ENCODE measurements at regions of chrX and their contacts with region 1.

Region 1: DNA sequence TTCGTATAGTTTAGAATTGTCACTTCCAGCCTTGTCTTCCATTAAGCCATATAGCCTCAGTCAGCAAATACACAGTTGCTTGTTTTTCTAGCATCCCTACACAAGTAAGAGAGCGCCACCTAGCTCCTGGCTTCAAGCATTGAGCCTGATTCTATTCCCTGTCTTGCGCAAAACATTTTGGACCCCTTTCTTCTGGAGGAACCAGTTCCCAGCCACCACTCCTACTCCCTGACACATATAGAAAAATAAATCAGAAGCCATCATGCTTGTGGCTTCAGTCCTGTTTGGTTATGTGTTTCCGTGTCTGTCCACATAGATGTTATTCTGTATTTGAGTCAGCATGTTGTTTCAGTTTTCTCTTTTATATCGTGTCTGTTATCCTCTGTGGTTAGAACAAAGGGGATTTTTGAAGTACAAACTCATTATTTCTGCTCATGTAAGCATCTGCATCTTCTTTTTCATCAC is 59.9 kb downstream of the GK start:
- DNase-seq: peak; percentile 31
- H3K4me3 Mint-ChIP-seq: peak overlapping the region; percentile 20
- H3K27ac Mint-ChIP-seq: peak overlapping the region; percentile 86
- H3K4me1 Mint-ChIP-seq: peaks cover 47% of the 10 kb centered on the region
- H3K27me3 Mint-ChIP-seq: no peaks in the 10 kb centered on the region

Region 2: DNA sequence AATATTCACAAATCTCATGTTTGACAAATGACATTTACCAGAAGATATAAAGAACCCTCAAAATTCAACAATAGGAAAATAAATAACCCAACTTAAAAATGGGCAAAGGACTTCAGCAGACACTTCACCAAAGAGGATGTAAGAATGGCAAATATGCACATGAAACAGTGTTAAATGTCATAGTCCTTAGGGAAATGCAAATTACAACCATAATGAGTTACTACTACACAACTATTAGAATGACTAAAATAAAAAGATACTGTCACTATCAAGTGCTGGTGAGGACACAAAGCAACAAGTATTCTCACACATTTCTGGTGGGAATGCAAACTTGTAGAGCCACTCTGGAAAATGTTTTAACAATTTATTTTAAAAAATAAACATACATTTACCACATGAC is 363.1 kb before region 1 on chrX:
- intact Hi-C with region 1: no loop called
- DNase-seq: no peak
- H3K4me3 Mint-ChIP-seq: no peak overlapping the region
- H3K27ac Mint-ChIP-seq: no peak overlapping the region
- H3K4me1 Mint-ChIP-seq: no peaks in the 10 kb centered on the region
- H3K27me3 Mint-ChIP-seq: no peaks in the 10 kb centered on the region

Region 3: GRCh38 chrX:30577362-30577991 is 135.6 kb before region 1 on chrX and contains the start of gene TASL:
- intact Hi-C with region 1: loop called (anchors 2 kb)
- DNase-seq: peak; percentile 27
- H3K4me3 Mint-ChIP-seq: peak within 1 kb of the TSS; percentile 92
- H3K27ac Mint-ChIP-seq: peak within 1 kb of the TSS; percentile 96
- H3K4me1 Mint-ChIP-seq: peaks cover 18% of the 10 kb centered on the region
- H3K27me3 Mint-ChIP-seq: no peaks in the 10 kb centered on the region
- total RNA-seq, gene TASL: 5.2 and 5.4 TPM in 2 replicates

Region 4: GRCh38 chrX:30635630-30636029 is 77.5 kb before region 1 on chrX:
- intact Hi-C with region 1: loop called (anchors 1 kb)
- DNase-seq: no peak
- H3K4me3 Mint-ChIP-seq: no peak overlapping the region
- H3K27ac Mint-ChIP-seq: no peak overlapping the region
- H3K4me1 Mint-ChIP-seq: peaks cover 3% of the 10 kb centered on the region
- H3K27me3 Mint-ChIP-seq: no peaks in the 10 kb centered on the region

Region 5: GRCh38 chrX:30643313-30643821 is 69.7 kb before region 1 on chrX:
- intact Hi-C with region 1: loop called (anchors 2 kb)
- DNase-seq: no peak
- H3K4me3 Mint-ChIP-seq: no peak overlapping the region
- H3K27ac Mint-ChIP-seq: peak overlapping the region; percentile 79
- H3K4me1 Mint-ChIP-seq: peaks cover 22% of the 10 kb centered on the region
- H3K27me3 Mint-ChIP-seq: no peaks in the 10 kb centered on the region

Region 6: DNA sequence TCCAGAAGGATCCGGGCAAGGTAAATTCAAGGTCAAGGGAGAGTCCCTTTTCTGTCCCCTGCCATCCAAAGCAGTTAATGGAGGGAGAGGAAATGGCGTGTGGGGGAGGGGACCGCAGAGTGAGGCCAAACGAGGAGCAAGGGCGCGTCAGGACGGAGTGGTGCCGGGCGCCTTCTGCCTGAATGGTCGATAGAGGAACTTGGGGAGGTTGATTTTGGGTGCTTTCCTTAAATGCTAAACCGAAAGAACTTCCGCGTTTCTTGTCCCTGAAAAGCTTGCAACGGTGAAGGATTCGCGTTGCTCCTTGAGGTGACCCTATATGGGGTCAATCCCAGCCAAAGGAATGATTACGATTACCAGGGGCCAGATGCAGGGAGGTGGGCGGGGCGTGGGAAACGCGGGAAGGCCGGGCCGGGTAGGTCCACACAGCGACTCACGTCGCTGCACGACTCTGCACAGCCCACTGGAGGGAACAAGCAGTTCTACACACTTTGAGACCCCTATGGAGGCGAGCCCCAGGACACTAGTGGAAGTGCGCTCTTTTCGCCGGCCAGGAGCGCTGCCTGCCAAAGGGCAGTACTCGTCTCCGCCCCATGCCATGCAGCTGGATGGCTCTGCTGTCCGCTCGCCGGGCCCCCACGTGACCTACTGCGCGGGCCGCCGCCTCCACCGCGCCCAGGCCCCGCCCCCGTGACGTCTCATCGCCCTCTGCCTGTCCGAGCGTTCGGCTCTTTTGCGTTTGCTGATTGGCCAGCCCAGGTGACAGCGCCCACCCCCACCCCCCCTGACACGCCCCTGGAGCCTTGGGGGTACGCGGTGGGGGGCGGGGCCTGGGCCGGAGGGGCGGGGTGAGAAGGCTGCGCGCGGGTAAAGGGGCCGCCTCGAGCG is 60.3 kb before region 1 on chrX:
- intact Hi-C with region 1: loop called (anchors 1 kb)
- DNase-seq: peak; percentile 89
- H3K4me3 Mint-ChIP-seq: peak overlapping the region; percentile 94
- H3K27ac Mint-ChIP-seq: peak overlapping the region; percentile 98
- H3K4me1 Mint-ChIP-seq: peaks cover 42% of the 10 kb centered on the region
- H3K27me3 Mint-ChIP-seq: no peaks in the 10 kb centered on the region

Region 7: DNA sequence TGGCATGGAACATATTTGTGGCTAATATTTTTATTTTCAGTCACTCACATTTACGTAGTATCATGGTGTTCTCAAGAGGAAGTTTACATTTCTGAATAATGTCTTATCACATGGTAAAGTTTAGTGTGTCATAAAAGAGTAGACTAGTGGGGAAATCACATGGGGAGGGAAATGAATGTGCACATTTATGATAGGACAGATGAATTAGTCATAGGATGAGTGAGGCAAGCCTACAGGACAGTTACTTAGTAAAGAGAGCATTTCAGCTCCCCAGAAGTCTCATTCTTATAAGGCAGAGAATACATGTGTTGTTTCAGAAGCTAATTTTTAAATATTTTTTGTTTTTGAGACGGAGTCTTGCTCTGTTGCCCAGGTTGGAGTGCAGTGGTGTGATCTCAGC is 53.7 kb before region 1 on chrX:
- intact Hi-C with region 1: loop called (anchors 1 kb)
- DNase-seq: no peak
- H3K4me3 Mint-ChIP-seq: peak overlapping the region; percentile 5
- H3K27ac Mint-ChIP-seq: peak overlapping the region; percentile 88
- H3K4me1 Mint-ChIP-seq: peaks cover 41% of the 10 kb centered on the region
- H3K27me3 Mint-ChIP-seq: no peaks in the 10 kb centered on the region

Region 8: DNA sequence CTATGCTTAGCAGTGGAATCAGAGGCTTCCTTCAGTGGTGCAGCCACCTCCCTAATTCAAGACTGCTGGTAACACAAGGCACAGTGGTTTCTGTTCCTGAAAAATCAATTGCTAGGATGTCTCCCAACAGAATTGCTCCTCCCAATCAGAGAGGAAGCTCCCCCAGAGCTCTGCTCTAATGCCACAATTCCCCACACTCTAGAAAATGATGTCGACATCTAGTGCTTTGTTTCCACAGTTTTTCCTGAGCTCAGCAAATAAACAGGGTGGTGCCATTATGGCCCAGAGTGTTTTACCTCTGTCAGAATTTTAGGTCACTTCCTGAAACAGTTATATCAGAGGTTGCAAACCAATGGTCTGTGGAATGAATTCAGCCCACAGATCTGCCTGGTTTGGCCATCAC is 151.3 kb after region 1 on chrX:
- intact Hi-C with region 1: no loop called
- DNase-seq: no peak
- H3K4me3 Mint-ChIP-seq: no peak overlapping the region
- H3K27ac Mint-ChIP-seq: no peak overlapping the region
- H3K4me1 Mint-ChIP-seq: peaks cover 2% of the 10 kb centered on the region
- H3K27me3 Mint-ChIP-seq: no peaks in the 10 kb centered on the region

Region 9: DNA sequence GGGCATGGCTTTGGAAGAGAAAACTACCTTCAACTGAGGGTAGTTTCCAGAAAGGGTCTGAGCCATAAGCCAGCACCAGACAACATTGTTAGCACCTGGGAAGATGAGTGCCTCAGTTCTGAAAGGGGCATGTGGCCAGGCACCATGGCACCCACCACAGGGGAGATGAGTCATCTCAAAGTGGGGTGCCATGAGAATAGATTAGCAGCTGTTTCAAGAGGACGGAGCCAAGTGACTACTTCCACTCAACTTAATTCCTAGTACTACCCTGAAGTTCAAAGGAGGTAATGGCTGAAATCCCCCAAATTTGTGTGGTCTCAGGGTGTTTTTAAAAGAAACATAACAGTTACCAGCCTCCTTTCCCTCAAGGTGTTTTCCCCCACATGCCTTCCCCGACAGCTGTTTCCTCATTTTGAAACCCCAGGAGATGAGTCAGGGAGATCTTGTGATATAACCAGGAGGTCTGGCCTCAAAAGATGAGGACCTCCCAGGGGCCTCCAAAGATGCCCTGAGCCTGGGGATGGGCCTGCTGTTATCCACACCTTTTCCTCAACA is 386.5 kb after region 1 on chrX:
- intact Hi-C with region 1: loop called (anchors 1 kb)
- DNase-seq: peak; percentile 9
- H3K4me3 Mint-ChIP-seq: no peak overlapping the region
- H3K27ac Mint-ChIP-seq: no peak overlapping the region
- H3K4me1 Mint-ChIP-seq: peaks cover 2% of the 10 kb centered on the region
- H3K27me3 Mint-ChIP-seq: peaks cover 2% of the 10 kb centered on the region

Measured in activated T-helper 2 cell treated with anti-CD3 and anti-CD28 coated beads, Interferon-gamma antibody, Interleukin-2, Interleukin-4, amounts not matched to agents 10 μg/mL and 5 μg/mL and 100 μg/mL, durations not matched to agents 14 hours and 24 hours and 36 hours (primary cell).